GM12878 (cell line): ENCODE measurements at regions of chr4 and their contacts with region 1.

Region 1: DNA sequence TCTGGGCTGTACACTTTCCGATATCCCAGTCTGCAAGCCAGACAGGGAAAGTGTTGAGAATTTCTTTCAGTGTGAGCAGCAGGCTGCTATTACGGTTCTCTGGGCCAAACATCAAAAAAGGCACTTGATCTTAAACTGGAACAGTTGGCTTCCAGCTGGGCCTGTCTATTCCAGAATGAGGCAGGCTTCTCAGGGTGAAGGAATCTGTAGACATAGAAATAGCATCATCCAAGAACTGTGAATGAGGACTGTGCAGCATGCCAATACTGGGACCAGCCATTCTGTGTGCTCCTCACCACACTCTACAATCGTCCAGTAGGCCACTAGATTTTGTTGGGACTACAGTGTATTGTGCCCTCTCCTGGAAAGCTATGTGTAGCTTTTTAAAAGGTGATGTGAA is 31.1 kb downstream of the ART3 start:
- DNase-seq: no peak
- ATAC-seq: peak; percentile 40; the same call in 2 of the 3 replicates
- H3K4me3 ChIP-seq: no peak overlapping the region
- H3K27ac ChIP-seq: no peak overlapping the region
- H3K4me1 ChIP-seq: no peaks in the 10 kb centered on the region
- H3K27me3 ChIP-seq: 0 out of 4 replicates have a peak, but pooled peaks cover 0 to 2% of the 10 kb centered on the region in 2 experiments
- CTCF ChIP-seq: no peak
- EP300 ChIP-seq: no peak
- POLR2A ChIP-seq: no peak
- RAD21 ChIP-seq: no peak

Region 2: GRCh38 chr4:76188557-76188956 is 82.9 kb after region 1 on chr4:
- CTCF ChIA-PET with region 1: no interaction called
- POLR2A ChIA-PET with region 1: no interaction called
- RAD21 ChIA-PET with region 1: no interaction called
- SMC1A ChIA-PET with region 1: no interaction called
- in situ Hi-C with region 1: no loop called
- intact Hi-C with region 1: no loop called
- DNase-seq: no peak
- ATAC-seq: no peak
- H3K4me3 ChIP-seq: no peak overlapping the region
- H3K27ac ChIP-seq: no peak overlapping the region
- H3K4me1 ChIP-seq: no peaks in the 10 kb centered on the region
- H3K27me3 ChIP-seq: no peaks in the 10 kb centered on the region
- CTCF ChIP-seq: no peak
- EP300 ChIP-seq: no peak
- POLR2A ChIP-seq: no peak
- RAD21 ChIP-seq: no peak

Region 3: GRCh38 chr4:76246025-76246424 is 140.4 kb after region 1 on chr4:
- CTCF ChIA-PET with region 1: no interaction called
- POLR2A ChIA-PET with region 1: no interaction called
- RAD21 ChIA-PET with region 1: no interaction called
- SMC1A ChIA-PET with region 1: no interaction called
- in situ Hi-C with region 1: no loop called
- intact Hi-C with region 1: no loop called
- DNase-seq: no peak
- ATAC-seq: no peak
- H3K4me3 ChIP-seq: no peak overlapping the region
- H3K27ac ChIP-seq: no peak overlapping the region
- H3K4me1 ChIP-seq: no peaks in the 10 kb centered on the region
- H3K27me3 ChIP-seq: peaks cover under 1 to 2% of the 10 kb centered on the region in 2 experiments; a peak in 3 of 4 replicates
- CTCF ChIP-seq: peak in 1 of 3 experiments; percentile 18; a peak in 2 of 6 replicates
- EP300 ChIP-seq: no peak
- POLR2A ChIP-seq: no peak
- RAD21 ChIP-seq: peak; percentile 39; the same call in 1 of the 2 replicates

Region 4: GRCh38 chr4:76377911-76378310 is 272.3 kb after region 1 on chr4:
- CTCF ChIA-PET with region 1: interaction called, 11 read pairs
- POLR2A ChIA-PET with region 1: no interaction called
- RAD21 ChIA-PET with region 1: no interaction called
- SMC1A ChIA-PET with region 1: interaction called, 3 read pairs
- in situ Hi-C with region 1: no loop called
- intact Hi-C with region 1: no loop called
- DNase-seq: no peak
- ATAC-seq: peak; percentile 32; the same call in 1 of the 3 replicates
- H3K4me3 ChIP-seq: no peak overlapping the region
- H3K27ac ChIP-seq: no peak overlapping the region
- H3K4me1 ChIP-seq: no peaks in the 10 kb centered on the region
- H3K27me3 ChIP-seq: no peaks in the 10 kb centered on the region; a peak in 2 of 4 replicates
- CTCF ChIP-seq: peak; percentile 49 to 52 (median 52); a peak in 5 of 6 replicates
- EP300 ChIP-seq: no peak
- POLR2A ChIP-seq: no peak
- RAD21 ChIP-seq: peak; percentile 84